PC-9 (cell line): ENCODE measurements at regions of chr12 and their contacts with region 1.

Region 1: DNA sequence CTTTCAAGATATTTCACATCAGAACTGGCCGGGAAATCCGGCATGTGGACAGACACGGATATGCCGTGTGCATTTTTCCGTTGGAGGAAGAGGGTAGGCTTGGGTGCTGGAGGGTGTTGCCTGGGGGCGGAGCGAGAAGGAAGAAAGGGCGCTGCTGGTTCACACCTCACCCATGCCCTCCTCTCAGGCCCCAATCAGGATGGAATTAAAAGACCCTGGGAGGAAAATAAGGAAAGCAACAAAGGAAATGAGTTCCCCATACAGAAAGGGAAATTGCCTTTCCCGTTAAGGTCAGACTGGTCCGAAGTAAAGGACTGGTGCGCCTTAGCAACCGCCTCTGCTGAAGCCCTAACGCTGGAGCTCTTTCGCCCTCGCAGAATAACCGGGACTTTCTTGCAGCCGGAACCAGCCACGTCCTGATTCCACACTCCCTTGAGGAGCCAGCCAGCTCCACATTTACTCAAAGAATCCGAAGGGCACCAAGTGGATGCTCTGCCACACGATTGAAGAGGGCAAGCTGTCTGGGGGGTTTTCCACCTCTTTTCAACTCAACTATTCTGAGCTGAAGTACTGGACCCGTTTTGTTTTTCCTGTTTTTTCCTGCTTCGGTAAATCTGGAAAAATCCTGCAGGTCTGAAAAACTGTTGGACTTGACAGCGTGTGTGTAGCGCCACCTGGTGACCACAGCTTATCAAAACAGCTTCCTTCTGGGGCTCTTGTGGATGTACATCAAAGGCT is 37.7 kb upstream of the BCL2L14 start:
- DNase-seq: peak; percentile 81 to 88
- H3K4me3 ChIP-seq: peak overlapping the region; percentile 28; the same call in 1 of the 2 replicates
- H3K27ac ChIP-seq: peak overlapping the region; percentile 14; the same call in 1 of the 2 replicates
- H3K4me1 ChIP-seq: peaks cover 7% of the 10 kb centered on the region
- H3K27me3 ChIP-seq: no peaks in the 10 kb centered on the region
- CTCF ChIP-seq: peak; percentile 95

Region 2: GRCh38 chr12:11513288-11513687 is 519.7 kb before region 1 on chr12:
- CTCF ChIA-PET with region 1: no interaction called
- POLR2A ChIA-PET with region 1: no interaction called
- intact Hi-C with region 1: loop called (anchors 2 kb)
- DNase-seq: no peak
- H3K4me3 ChIP-seq: no peak overlapping the region
- H3K27ac ChIP-seq: no peak overlapping the region
- H3K4me1 ChIP-seq: peaks cover 38% of the 10 kb centered on the region
- H3K27me3 ChIP-seq: no peaks in the 10 kb centered on the region
- CTCF ChIP-seq: no peak

Region 3: DNA sequence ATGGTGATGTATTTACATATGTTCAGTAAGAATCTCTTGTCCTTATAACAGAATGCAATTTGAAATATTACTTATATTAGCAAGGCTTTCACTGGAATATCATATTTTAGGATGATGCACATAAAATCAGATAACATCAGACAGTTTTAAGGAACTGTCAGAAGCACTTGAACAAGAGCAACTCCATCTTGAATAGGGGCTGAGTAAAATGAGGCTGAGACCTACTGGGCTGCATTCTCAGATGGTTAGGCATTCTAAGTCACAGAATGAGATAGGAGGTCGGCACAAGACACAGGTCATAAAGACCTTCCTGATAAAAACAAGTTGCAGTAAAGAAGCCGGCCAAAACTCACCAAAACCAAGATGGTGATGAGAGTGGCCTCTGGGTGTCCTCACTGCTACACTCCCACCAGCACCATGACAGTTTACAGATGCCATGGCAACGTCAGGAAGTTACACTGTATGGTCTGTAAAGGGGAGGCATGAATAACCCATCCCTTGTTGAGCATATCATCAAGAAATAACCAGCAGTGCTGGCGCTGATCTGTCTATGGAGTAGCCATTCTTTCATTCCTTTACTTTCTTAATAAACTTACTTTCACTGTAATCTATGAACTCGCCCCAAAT is 411.1 kb before region 1 on chr12:
- CTCF ChIA-PET with region 1: no interaction called
- POLR2A ChIA-PET with region 1: interaction called, 3 read pairs
- intact Hi-C with region 1: loop called (anchors 5 kb)
- DNase-seq: no peak
- H3K4me3 ChIP-seq: no peak overlapping the region
- H3K27ac ChIP-seq: peak overlapping the region; percentile 85; the same call in 1 of the 2 replicates
- H3K4me1 ChIP-seq: peaks cover 23% of the 10 kb centered on the region
- H3K27me3 ChIP-seq: no peaks in the 10 kb centered on the region
- CTCF ChIP-seq: no peak

Region 4: GRCh38 chr12:11798856-11799501 is 234.0 kb before region 1 on chr12:
- CTCF ChIA-PET with region 1: interaction called, 4 read pairs
- POLR2A ChIA-PET with region 1: no interaction called
- intact Hi-C with region 1: loop called (anchors 2 kb)
- DNase-seq: peak in 1 of 2 experiments; percentile 78
- H3K4me3 ChIP-seq: no peak overlapping the region
- H3K27ac ChIP-seq: no peak overlapping the region; the same call in 1 of the 2 replicates
- H3K4me1 ChIP-seq: peaks cover 46% of the 10 kb centered on the region
- H3K27me3 ChIP-seq: no peaks in the 10 kb centered on the region
- CTCF ChIP-seq: no peak

Region 5: DNA sequence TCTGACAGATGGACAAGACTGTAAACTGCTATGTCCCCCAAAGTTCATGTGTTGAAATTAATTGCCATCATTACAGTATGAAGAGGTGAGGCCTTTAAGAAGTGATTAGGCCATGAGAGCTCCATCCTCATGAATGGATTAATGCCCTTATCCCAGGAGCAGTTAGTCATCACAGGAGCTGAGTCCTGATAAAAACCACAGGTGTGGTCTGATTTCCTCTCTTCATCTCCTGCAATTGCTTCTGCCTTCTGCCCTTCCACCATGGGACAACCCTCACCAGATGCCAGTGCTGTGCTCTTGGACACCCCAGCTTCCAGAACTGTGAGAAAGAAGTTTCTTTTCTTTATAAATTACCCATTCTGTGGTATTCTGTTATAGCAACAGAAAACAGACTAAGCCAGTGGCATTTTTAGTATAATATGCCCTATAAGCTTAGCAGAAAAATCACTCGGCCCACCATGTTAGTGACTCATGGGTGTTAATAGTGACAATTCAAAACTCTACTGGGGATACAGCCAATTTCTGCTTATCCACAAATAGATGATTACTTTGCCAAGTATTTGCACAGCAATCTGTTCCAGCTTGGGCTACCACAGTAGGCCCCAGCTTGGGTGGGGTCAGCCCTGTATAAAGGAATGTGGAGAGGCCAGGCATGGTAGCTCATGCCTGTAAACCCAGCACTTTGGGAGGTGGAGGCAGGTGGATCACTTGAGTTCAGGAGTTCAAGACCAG is 91.2 kb before region 1 on chr12:
- CTCF ChIA-PET with region 1: no interaction called
- POLR2A ChIA-PET with region 1: no interaction called
- intact Hi-C with region 1: no loop called
- DNase-seq: peak; percentile 76 to 86
- H3K4me3 ChIP-seq: no peak overlapping the region
- H3K27ac ChIP-seq: peak overlapping the region; percentile 83
- H3K4me1 ChIP-seq: peaks cover 22% of the 10 kb centered on the region
- H3K27me3 ChIP-seq: no peaks in the 10 kb centered on the region
- CTCF ChIP-seq: no peak

Region 6: GRCh38 chr12:11958221-11959091 is 74.6 kb before region 1 on chr12:
- CTCF ChIA-PET with region 1: interaction called, 5 read pairs
- POLR2A ChIA-PET with region 1: no interaction called
- intact Hi-C with region 1: loop called (anchors 2 kb)
- DNase-seq: peak; percentile 60 to 92
- H3K4me3 ChIP-seq: peak overlapping the region; percentile 12; the same call in 1 of the 2 replicates
- H3K27ac ChIP-seq: peak overlapping the region; percentile 99
- H3K4me1 ChIP-seq: peaks cover 28% of the 10 kb centered on the region
- H3K27me3 ChIP-seq: no peaks in the 10 kb centered on the region
- CTCF ChIP-seq: no peak; the same call in 1 of the 2 replicates

Region 7: DNA sequence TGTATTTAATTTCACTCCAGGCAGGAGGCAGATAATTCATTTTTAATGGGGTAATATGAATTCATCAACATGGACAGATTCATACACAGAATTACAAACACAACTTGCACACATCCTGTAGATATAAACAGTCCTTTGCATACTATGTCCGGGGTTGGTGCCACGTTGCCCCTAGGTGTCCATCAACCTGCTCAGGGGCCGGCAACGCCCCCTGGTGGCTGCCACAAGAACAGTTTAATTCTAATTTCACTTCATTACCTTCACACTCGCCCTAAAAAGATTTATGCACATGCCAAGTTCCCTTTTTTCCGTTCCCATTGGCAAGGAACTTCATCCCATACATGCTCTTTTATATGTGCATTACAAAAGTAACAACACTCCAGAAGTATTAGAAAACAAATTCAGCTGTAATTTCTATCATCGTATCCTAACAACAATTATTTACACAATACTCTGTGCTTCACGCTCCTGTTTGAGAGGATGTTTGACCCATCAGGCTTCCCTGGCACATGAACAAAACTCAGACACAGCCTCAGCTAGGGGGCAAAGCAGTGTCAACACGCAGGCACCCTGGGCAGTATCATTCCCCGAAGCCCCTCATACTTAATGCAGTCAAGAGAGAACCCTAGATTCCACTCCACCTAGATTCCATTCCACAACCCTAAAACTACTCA is 301.5 kb after region 1 on chr12:
- CTCF ChIA-PET with region 1: interaction called, 3 read pairs
- POLR2A ChIA-PET with region 1: no interaction called
- intact Hi-C with region 1: loop called (anchors 2 kb)
- DNase-seq: peak in 1 of 2 experiments; percentile 57
- H3K4me3 ChIP-seq: no peak overlapping the region
- H3K27ac ChIP-seq: no peak overlapping the region
- H3K4me1 ChIP-seq: peaks cover 44% of the 10 kb centered on the region
- H3K27me3 ChIP-seq: no peaks in the 10 kb centered on the region
- CTCF ChIP-seq: peak; percentile 89